Thyroid gland (tissue), 4 donors: ENCODE measurements at regions of chr1 and their contacts with region 1.

Region 1: DNA sequence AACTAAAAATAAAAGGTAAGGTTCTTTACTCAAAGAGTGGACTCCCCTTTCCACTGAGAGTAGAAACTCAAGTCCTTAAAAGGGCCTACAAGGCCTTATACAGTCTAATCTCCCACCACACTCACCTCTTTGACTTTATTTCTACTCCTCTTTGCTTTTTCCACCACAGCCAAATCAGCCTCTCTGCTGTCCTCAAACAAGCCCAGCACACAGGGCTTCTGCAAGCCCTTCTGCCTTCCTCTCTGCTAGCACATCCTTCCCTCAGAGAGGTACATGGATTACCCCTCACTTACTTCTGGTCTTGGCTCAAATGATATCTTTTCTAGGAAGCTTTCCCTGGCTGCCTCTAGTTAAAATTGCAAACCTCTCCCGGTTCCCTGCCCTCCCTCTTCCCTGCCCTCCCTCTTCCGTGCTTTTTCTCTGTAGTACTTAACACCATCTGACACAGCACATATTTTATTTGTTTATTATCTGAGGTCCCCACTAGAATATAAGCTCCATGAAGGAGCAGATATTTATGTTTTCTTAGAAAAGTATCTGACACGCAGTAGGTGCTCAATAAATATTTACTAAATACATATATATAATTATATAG is 1.7 kb downstream of the LYST start:
- DNase-seq: no peak
- H3K4me3 ChIP-seq: no peak overlapping the region
- H3K27ac ChIP-seq: peak overlapping the region in 2 of 3 donors; percentile 97
- H3K4me1 ChIP-seq: peaks cover 13 to 19% of the 10 kb centered on the region in 2 donors
- H3K27me3 ChIP-seq: no peaks in the 10 kb centered on the region
- CTCF ChIP-seq: no peak
- POLR2A ChIP-seq: no peak

Region 2: DNA sequence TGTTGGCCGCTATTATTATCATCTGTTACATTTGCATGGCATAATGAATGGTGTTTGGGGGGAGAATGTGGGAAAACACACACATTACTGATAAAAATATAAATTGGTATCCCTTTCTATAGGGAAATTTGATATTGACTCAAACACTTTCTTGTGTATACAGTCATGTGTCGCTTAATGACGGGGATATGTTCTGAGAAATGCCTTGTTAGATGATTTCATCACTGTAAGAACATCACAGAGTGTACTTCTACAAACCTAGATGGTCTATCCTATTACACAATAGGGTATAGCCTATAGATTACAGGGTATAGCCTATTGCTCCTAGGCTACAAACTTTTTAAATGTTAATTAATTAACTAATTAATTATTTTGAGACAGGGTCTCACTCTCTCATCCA is 293.5 kb before region 1 on chr1:
- intact Hi-C with region 1: no loop called
- DNase-seq: no peak
- H3K4me3 ChIP-seq: no peak overlapping the region
- H3K27ac ChIP-seq: no peak overlapping the region
- H3K4me1 ChIP-seq: no peaks in the 10 kb centered on the region
- H3K27me3 ChIP-seq: no peaks in the 10 kb centered on the region
- CTCF ChIP-seq: no peak
- POLR2A ChIP-seq: no peak

Region 3: GRCh38 chr1:235971571-235972310 is 106.7 kb after region 1 on chr1:
- intact Hi-C with region 1: loop called (anchors 5 kb)
- DNase-seq: peak; percentile 86 to 90
- H3K4me3 ChIP-seq: peak overlapping the region in 1 of 3 donors; percentile 21
- H3K27ac ChIP-seq: peak overlapping the region; percentile 77 to 89 (median 83)
- H3K4me1 ChIP-seq: peaks cover 4 to 5% of the 10 kb centered on the region in 2 donors
- H3K27me3 ChIP-seq: no peaks in the 10 kb centered on the region
- CTCF ChIP-seq: peak; percentile 51 to 88 (median 76)
- POLR2A ChIP-seq: peak in 1 of 2 donors; percentile 22